Naive thymus-derived CD4-positive, alpha-beta T cell (primary cell): ENCODE measurements at regions of chr18 and their contacts with region 1.

Region 1: GRCh38 chr18:10787293-10787901 is 261.6 kb downstream of the NAPG start:
- DNase-seq: peak; percentile 54 to 85 (median 75)
- ATAC-seq: peak; percentile 96
- H3K4me3 ChIP-seq: no peak overlapping the region
- H3K4me3 Mint-ChIP-seq: peak overlapping the region in 4 of 10 donors; percentile 7 to 33 (median 14)
- H3K27ac ChIP-seq: no peak overlapping the region
- H3K27ac Mint-ChIP-seq: peak overlapping the region in 2 of 9 donors; percentile 25 to 64
- H3K4me1 ChIP-seq: no peaks in the 10 kb centered on the region
- H3K4me1 Mint-ChIP-seq: peaks cover 0 to 9% (median 5%) of the 10 kb centered on the region in 7 donors
- H3K27me3 ChIP-seq: no peaks in the 10 kb centered on the region
- H3K27me3 Mint-ChIP-seq: peaks cover 3 to 65% (median 27%) of the 10 kb centered on the region in 5 donors

Region 2: DNA sequence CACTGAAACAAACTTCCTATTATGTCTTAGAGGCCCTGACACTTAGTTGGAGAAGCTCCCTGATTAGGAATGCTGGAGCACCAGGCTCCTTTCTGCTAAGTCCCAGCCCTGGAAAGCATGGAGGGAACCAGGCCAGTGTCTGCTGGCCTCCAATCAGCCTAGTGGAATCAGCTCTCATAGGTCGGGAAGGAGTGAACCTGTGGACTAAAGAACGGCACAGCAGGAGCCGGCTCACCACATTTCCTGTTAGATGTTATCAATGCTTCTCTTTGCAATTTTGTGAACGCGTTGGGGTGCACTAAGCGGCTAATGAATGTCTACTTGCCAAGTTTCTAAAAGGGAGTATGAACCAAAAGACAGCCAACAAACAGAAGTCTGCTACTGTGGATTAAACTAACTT is 35.1 kb after region 1 on chr18:
- CTCF ChIA-PET with region 1: no interaction called
- POLR2A ChIA-PET with region 1: no interaction called
- intact Hi-C with region 1: loop called in 1 of 2 experiments (anchors 2 kb)
- DNase-seq: no peak
- ATAC-seq: no peak
- H3K4me3 ChIP-seq: no peak overlapping the region
- H3K4me3 Mint-ChIP-seq: no peak overlapping the region
- H3K27ac ChIP-seq: no peak overlapping the region
- H3K27ac Mint-ChIP-seq: no peak overlapping the region
- H3K4me1 ChIP-seq: no peaks in the 10 kb centered on the region
- H3K4me1 Mint-ChIP-seq: peaks cover 0 to 5% (median 0%) of the 10 kb centered on the region in 7 donors
- H3K27me3 ChIP-seq: peaks cover 0 to 6% of the 10 kb centered on the region in 2 donors
- H3K27me3 Mint-ChIP-seq: peaks cover 13 to 31% (median 20%) of the 10 kb centered on the region in 5 donors

Region 3: DNA sequence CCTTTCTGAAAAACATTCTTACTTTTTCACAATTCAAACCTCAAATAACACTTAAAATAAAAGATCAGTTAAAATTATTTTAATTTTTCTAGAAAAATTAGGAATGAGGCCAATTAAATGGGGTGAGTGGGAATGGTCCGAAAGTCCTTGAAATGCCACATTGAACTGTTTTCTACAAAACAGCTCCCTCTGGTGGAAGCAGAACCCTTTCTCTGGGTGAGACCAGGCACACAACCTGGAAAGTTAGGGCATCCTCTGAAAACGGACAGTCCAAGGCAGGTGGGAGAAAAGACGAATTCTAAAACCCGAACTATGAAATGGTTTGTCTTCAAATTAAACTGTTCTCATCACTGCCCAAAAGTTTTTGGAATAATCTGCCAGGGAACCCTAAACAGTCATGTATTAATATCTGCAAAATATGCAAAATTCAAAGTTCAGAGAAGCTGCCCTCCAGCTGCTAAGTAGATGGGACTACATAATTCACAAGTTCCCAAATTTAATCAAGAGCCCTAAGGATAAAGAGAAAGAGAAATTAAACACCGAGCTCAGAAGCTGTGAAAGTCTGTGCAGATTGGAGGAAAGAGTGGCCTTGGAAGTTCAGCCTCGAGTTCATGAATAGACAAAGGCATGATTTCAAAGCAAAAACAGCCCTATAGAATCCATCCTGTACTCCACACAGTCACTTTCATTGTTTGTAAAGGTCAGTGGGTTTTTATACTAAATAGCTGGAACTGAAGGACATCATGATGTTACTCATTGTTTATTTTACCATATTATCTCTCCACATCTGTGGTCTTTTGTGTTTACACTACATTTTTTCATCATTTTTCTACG is 253.6 kb after region 1 on chr18:
- CTCF ChIA-PET with region 1: interaction called, 3 read pairs
- POLR2A ChIA-PET with region 1: no interaction called
- intact Hi-C with region 1: loop called in 1 of 2 experiments (anchors 1 kb)
- DNase-seq: peak in 2 of 9 donors; percentile 5 to 8
- ATAC-seq: no peak
- H3K4me3 ChIP-seq: no peak overlapping the region
- H3K4me3 Mint-ChIP-seq: no peak overlapping the region
- H3K27ac ChIP-seq: no peak overlapping the region
- H3K27ac Mint-ChIP-seq: no peak overlapping the region
- H3K4me1 ChIP-seq: no peaks in the 10 kb centered on the region
- H3K4me1 Mint-ChIP-seq: no peaks in the 10 kb centered on the region
- H3K27me3 ChIP-seq: no peaks in the 10 kb centered on the region
- H3K27me3 Mint-ChIP-seq: peaks cover 5 to 15% (median 10%) of the 10 kb centered on the region in 5 donors

Region 4: DNA sequence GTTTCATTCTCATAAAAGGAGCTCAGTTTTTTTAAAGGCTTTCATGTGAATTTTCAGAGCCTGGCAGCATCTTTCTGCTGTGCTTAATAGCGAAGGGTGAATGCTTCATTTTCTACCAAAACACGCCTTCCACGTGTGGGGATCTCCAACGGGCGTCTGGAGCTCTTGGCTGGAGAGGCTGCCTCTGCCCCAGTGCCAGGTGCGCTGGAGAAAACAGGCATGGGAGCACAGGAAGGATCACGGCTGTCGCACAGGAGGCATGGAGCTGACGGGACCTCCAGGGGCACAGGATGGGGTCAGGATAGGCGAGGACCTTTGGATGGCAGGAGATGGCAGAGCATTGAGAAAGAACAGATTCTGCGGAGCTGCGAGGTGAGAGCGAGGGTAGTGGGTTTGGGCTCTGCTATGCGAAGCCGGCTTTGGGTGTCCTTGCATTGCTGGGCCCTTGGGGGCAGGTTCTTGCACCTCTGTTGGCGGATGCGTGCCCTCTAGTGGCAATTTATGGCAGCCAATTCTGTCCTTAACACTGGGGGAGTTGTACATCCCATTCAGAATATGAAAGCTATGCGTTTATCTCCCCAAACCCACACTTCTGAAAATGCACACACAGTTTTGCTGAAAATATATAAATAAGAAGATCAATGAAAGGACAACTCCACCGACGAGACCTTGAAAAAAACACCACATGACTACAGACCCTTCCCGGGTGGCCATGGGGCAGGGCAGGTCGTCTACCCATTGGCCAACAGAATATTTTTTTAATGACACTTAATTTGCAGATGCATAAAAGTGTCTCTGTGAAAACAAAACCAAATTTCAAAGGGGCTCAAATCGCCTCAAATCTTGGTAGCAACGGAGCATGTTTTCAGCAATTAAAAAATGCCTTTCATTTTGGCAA is 731.6 kb after region 1 on chr18:
- CTCF ChIA-PET with region 1: no interaction called
- POLR2A ChIA-PET with region 1: no interaction called
- intact Hi-C with region 1: loop called in 1 of 2 experiments (anchors 2 kb)
- DNase-seq: peak in 2 of 9 donors; percentile 11 to 27
- ATAC-seq: no peak
- H3K4me3 ChIP-seq: no peak overlapping the region
- H3K4me3 Mint-ChIP-seq: no peak overlapping the region
- H3K27ac ChIP-seq: no peak overlapping the region
- H3K27ac Mint-ChIP-seq: no peak overlapping the region
- H3K4me1 ChIP-seq: no peaks in the 10 kb centered on the region
- H3K4me1 Mint-ChIP-seq: no peaks in the 10 kb centered on the region
- H3K27me3 ChIP-seq: no peaks in the 10 kb centered on the region
- H3K27me3 Mint-ChIP-seq: peaks cover 0 to 20% (median 9%) of the 10 kb centered on the region in 5 donors